GM12878 (cell line): ENCODE measurements at regions of chr14 and their contacts with region 1.

Region 1: DNA sequence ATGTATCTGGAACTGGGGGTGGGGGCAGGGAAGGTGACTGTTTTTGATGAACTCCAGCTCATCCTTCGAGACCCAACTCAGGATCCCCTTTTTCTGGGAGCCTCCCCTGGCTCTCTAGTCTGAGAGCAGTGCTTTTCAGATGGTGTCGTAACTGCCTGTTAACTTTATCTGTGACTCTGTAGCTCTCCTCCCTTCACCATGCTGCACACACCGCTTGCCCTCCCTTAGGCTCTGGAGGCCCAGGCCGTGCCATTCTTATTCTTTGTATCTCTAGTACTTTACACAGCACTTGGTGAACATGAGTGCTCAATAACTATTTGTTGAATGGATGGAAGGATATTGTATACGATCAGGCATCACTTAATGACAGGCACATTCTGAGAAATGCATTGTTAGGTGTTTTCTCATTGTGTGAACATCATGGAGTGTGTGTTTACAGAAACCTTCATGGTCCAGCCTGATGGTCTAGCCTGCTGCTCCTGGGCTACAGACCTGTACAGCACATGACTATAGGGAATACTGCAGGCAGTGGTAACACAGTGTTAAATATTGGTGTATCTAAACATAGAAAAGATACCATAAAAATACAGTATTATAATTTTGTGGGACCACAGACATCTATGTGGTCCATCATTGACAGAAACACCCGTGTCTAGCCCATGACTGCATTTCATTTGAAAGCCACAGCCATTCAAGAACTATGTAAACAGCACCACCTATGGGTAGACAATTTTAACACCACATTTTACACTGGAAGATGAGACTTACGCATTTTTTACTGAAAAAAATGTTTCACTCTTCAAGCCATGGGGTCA is 91.8 kb downstream of the EML1 start:
- DNase-seq: peak; percentile 7
- ATAC-seq: peak; percentile 93
- H3K4me3 ChIP-seq: no peak overlapping the region
- H3K27ac ChIP-seq: no peak overlapping the region
- H3K4me1 ChIP-seq: no peaks in the 10 kb centered on the region
- H3K27me3 ChIP-seq: no peaks in the 10 kb centered on the region; a peak in 2 of 4 replicates
- CTCF ChIP-seq: peak; percentile 54 to 82 (median 56)
- EP300 ChIP-seq: no peak
- POLR2A ChIP-seq: no peak
- RAD21 ChIP-seq: peak; percentile 86

Region 2: DNA sequence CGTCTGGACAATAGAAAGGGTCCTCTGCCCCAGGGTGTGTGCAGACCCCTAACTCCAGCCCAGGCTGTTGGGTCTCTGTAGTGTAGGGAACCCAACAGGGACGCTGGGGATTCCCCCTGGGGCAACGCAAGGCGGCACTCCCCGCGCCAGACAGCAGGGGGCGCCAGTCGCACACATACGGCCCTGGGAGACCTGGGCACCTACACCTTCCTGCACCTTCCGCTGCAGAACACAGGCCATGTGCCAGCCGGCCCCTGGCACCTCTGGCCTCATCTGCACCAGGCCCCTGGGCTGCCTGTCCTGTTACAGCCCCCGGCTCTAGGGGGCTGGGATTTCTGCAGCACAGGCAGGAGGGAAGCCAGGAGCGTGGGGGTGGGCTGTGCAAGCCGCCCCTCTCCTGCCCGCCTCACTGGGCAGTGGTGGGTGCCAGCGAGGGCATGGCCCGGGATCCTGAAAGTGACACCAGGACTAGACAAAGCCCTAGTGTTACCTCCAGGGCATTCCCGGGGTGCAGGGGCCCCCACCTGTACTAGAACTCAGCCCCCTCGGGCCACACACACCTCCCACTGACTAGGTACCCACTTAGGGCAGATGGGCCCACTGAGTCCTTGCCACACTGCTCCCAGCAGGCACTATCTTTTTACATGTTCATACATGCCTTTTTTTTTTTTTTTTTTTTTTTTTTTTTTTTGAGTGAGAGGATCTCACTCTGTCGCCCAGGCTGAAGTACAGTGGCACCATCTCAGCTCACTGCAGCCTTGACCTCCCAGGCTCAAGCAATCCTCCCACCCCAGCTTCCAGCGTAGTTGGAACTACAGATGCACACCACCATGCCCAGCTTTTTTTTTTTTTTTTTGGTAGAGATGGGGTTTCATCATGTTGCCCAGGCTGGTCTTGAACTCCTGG is 366.3 kb before region 1 on chr14:
- CTCF ChIA-PET with region 1: no interaction called
- POLR2A ChIA-PET with region 1: no interaction called
- RAD21 ChIA-PET with region 1: no interaction called
- SMC1A ChIA-PET with region 1: interaction called, 3 read pairs
- in situ Hi-C with region 1: no loop called
- intact Hi-C with region 1: loop called (anchors 1 kb)
- DNase-seq: no peak
- ATAC-seq: peak; percentile 91
- H3K4me3 ChIP-seq: no peak overlapping the region
- H3K27ac ChIP-seq: no peak overlapping the region
- H3K4me1 ChIP-seq: no peaks in the 10 kb centered on the region
- H3K27me3 ChIP-seq: no peaks in the 10 kb centered on the region
- CTCF ChIP-seq: peak; percentile 96 to 99 (median 96)
- EP300 ChIP-seq: no peak
- POLR2A ChIP-seq: no peak
- RAD21 ChIP-seq: peak; percentile 84

Region 3: GRCh38 chr14:99524804-99525698 is 360.0 kb before region 1 on chr14:
- CTCF ChIA-PET with region 1: no interaction called
- POLR2A ChIA-PET with region 1: no interaction called
- RAD21 ChIA-PET with region 1: no interaction called
- SMC1A ChIA-PET with region 1: interaction called, 3 read pairs
- in situ Hi-C with region 1: loop called (anchors 5 kb)
- intact Hi-C with region 1: no loop called
- DNase-seq: no peak
- ATAC-seq: peak; percentile 47
- H3K4me3 ChIP-seq: no peak overlapping the region
- H3K27ac ChIP-seq: no peak overlapping the region
- H3K4me1 ChIP-seq: no peaks in the 10 kb centered on the region
- H3K27me3 ChIP-seq: no peaks in the 10 kb centered on the region
- CTCF ChIP-seq: peak in 2 of 3 experiments; percentile 18 to 22; a peak in 1 of 6 replicates
- EP300 ChIP-seq: no peak
- POLR2A ChIP-seq: no peak
- RAD21 ChIP-seq: no peak

Region 4: GRCh38 chr14:99683619-99684355 is 201.3 kb before region 1 on chr14 and contains the start of gene CYP46A1:
- CTCF ChIA-PET with region 1: interaction called, 9 read pairs
- POLR2A ChIA-PET with region 1: interaction called, 4 read pairs
- RAD21 ChIA-PET with region 1: interaction called, 5 read pairs
- SMC1A ChIA-PET with region 1: interaction called, 3 read pairs
- in situ Hi-C with region 1: loop called (anchors 5 kb)
- intact Hi-C with region 1: loop called (anchors 1 kb)
- DNase-seq: peak; percentile 89
- ATAC-seq: peak; percentile 95
- H3K4me3 ChIP-seq: peak within 1 kb of the TSS; percentile 99
- H3K27ac ChIP-seq: peak within 1 kb of the TSS; percentile 70
- H3K4me1 ChIP-seq: peaks cover 4% of the 10 kb centered on the region
- H3K27me3 ChIP-seq: peaks cover 0 to 2% of the 10 kb centered on the region in 2 experiments; a peak in 2 of 4 replicates
- CTCF ChIP-seq: no peak
- EP300 ChIP-seq: no peak
- POLR2A ChIP-seq: peak; percentile 68
- RAD21 ChIP-seq: no peak
- polyA plus RNA-seq, gene CYP46A1: not detected

Region 5: DNA sequence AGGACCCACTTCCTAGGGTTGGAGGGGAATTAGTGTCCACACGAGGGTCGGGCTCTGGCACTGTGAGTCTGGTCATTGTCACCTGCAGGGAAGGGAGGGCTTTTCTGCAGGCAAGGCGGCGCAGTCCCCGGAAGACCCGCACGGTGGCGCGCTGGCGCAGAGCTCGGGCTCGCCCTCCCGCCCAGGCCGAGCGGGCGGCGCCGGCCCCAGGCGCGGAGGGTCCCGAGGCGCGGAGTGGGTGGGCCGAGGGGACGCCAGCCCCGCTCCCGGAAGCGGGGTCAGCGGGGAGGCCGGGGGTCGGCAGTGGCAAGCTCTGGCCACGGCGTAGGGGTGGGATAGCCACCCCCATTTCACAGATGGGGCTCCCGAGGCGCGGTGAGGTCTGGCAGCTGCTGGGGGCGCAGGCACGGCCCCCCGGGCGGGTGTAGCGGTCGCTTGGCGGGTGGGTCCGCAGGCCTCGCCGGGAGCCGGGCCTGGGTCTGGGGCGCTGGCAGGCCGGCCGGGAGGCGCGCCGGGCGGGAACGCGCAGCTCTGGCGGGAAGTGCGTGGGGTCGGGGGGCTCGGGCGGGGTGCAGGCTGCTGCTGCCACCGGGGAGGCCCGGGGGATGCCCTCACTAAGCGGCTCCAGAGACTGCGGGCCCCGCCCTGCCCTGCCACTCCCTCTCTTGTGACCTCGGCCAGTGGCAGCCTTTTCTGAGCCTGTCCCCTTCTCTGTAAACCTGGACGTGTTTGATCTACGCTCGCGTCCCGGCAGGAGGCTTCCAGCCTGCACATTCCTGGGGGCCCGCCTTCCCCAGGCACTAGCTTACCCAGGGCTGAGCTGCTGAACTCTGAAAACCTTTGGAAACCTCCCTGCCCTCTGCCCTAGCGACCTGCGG is 154.8 kb before region 1 on chr14:
- CTCF ChIA-PET with region 1: interaction called, 18 read pairs
- POLR2A ChIA-PET with region 1: interaction called, 3 read pairs
- RAD21 ChIA-PET with region 1: interaction called, 4 read pairs
- SMC1A ChIA-PET with region 1: interaction called, 3 read pairs
- in situ Hi-C with region 1: no loop called
- intact Hi-C with region 1: loop called (anchors 1 kb)
- DNase-seq: no peak
- ATAC-seq: peak; percentile 93
- H3K4me3 ChIP-seq: no peak overlapping the region
- H3K27ac ChIP-seq: no peak overlapping the region
- H3K4me1 ChIP-seq: no peaks in the 10 kb centered on the region
- H3K27me3 ChIP-seq: no peaks in the 10 kb centered on the region; a peak in 4 of 4 replicates
- CTCF ChIP-seq: peak; percentile 78 to 81 (median 81)
- EP300 ChIP-seq: no peak
- POLR2A ChIP-seq: no peak
- RAD21 ChIP-seq: peak; percentile 58

Region 6: GRCh38 chr14:99802301-99803105 is 82.5 kb before region 1 on chr14:
- CTCF ChIA-PET with region 1: no interaction called
- POLR2A ChIA-PET with region 1: no interaction called
- RAD21 ChIA-PET with region 1: no interaction called
- SMC1A ChIA-PET with region 1: no interaction called
- in situ Hi-C with region 1: no loop called
- intact Hi-C with region 1: no loop called
- DNase-seq: no peak
- ATAC-seq: no peak
- H3K4me3 ChIP-seq: no peak overlapping the region
- H3K27ac ChIP-seq: no peak overlapping the region
- H3K4me1 ChIP-seq: no peaks in the 10 kb centered on the region
- H3K27me3 ChIP-seq: peaks cover 2 to 6% of the 10 kb centered on the region in 2 experiments
- CTCF ChIP-seq: no peak
- EP300 ChIP-seq: no peak
- POLR2A ChIP-seq: no peak
- RAD21 ChIP-seq: no peak

Region 7: GRCh38 chr14:99899578-99900178 is 14.6 kb after region 1 on chr14:
- CTCF ChIA-PET with region 1: interaction called, 30 read pairs
- POLR2A ChIA-PET with region 1: interaction called, 3 read pairs
- RAD21 ChIA-PET with region 1: interaction called, 4 read pairs
- SMC1A ChIA-PET with region 1: interaction called, 6 read pairs
- in situ Hi-C with region 1: no loop called
- intact Hi-C with region 1: no loop called
- DNase-seq: no peak
- ATAC-seq: peak; percentile 53
- H3K4me3 ChIP-seq: no peak overlapping the region
- H3K27ac ChIP-seq: no peak overlapping the region
- H3K4me1 ChIP-seq: no peaks in the 10 kb centered on the region
- H3K27me3 ChIP-seq: no peaks in the 10 kb centered on the region; a peak in 1 of 4 replicates
- CTCF ChIP-seq: peak in 1 of 3 experiments; percentile 48; a peak in 2 of 6 replicates
- EP300 ChIP-seq: no peak
- POLR2A ChIP-seq: no peak
- RAD21 ChIP-seq: no peak